ENCODE measurements at regions of chr1 and their contacts with region 1.

Region 1: GRCh38 chr1:37958690-37959089 is 11.8 kb upstream of the INPP5B start:
- DNase-seq: no peak
- ATAC-seq: no peak
- H3K4me3 ChIP-seq: no peak overlapping the region
- H3K27ac ChIP-seq: no peak overlapping the region
- H3K4me1 ChIP-seq: no peaks in the 10 kb centered on the region
- H3K27me3 ChIP-seq: no peaks in the 10 kb centered on the region
- CTCF ChIP-seq: no peak
- EP300 ChIP-seq: no peak
- POLR2A ChIP-seq: no peak
- RAD21 ChIP-seq: no peak

Region 2: GRCh38 chr1:37851782-37852210 is 106.9 kb before region 1 on chr1:
- CTCF ChIA-PET with region 1: no interaction called
- POLR2A ChIA-PET with region 1: no interaction called
- in situ Hi-C with region 1: no loop called
- intact Hi-C with region 1: no loop called
- DNase-seq: no peak
- ATAC-seq: peak; percentile 19; the same call in 2 of the 3 replicates
- H3K4me3 ChIP-seq: no peak overlapping the region
- H3K27ac ChIP-seq: no peak overlapping the region
- H3K4me1 ChIP-seq: peaks cover 6 to 20% of the 10 kb centered on the region in 2 experiments; a peak in 4 of 5 replicates
- H3K27me3 ChIP-seq: no peaks in the 10 kb centered on the region
- CTCF ChIP-seq: no peak
- EP300 ChIP-seq: no peak
- POLR2A ChIP-seq: no peak
- RAD21 ChIP-seq: no peak

Region 3: GRCh38 chr1:37947364-37947763 is 11.3 kb before region 1 on chr1:
- CTCF ChIA-PET with region 1: no interaction called
- POLR2A ChIA-PET with region 1: interaction called, 10 read pairs
- in situ Hi-C with region 1: no loop called
- intact Hi-C with region 1: no loop called
- DNase-seq: no peak
- ATAC-seq: no peak
- H3K4me3 ChIP-seq: no peak overlapping the region
- H3K27ac ChIP-seq: peak overlapping the region; percentile 89; the same call in 2 of the 3 replicates
- H3K4me1 ChIP-seq: peaks cover 15 to 29% of the 10 kb centered on the region in 2 experiments; a peak in 4 of 5 replicates
- H3K27me3 ChIP-seq: no peaks in the 10 kb centered on the region
- CTCF ChIP-seq: no peak
- EP300 ChIP-seq: no peak
- POLR2A ChIP-seq: no peak
- RAD21 ChIP-seq: no peak

Region 4: GRCh38 chr1:38088366-38088765 is 129.7 kb after region 1 on chr1:
- CTCF ChIA-PET with region 1: no interaction called
- POLR2A ChIA-PET with region 1: no interaction called
- in situ Hi-C with region 1: no loop called
- intact Hi-C with region 1: no loop called
- DNase-seq: peak in 1 of 4 experiments; percentile 40
- ATAC-seq: peak; percentile 88
- H3K4me3 ChIP-seq: no peak overlapping the region
- H3K27ac ChIP-seq: no peak overlapping the region
- H3K4me1 ChIP-seq: no peaks in the 10 kb centered on the region; a peak in 1 of 5 replicates
- H3K27me3 ChIP-seq: peaks cover 33 to 64% of the 10 kb centered on the region in 2 experiments; a peak in 4 of 5 replicates
- CTCF ChIP-seq: peak; percentile 15 to 38 (median 34); a peak in 4 of 6 replicates
- EP300 ChIP-seq: no peak
- POLR2A ChIP-seq: no peak
- RAD21 ChIP-seq: peak in 1 of 2 experiments; percentile 36; a peak in 2 of 4 replicates

Region 5: GRCh38 chr1:38152351-38153065 is 193.8 kb after region 1 on chr1:
- CTCF ChIA-PET with region 1: no interaction called
- POLR2A ChIA-PET with region 1: no interaction called
- in situ Hi-C with region 1: no loop called
- intact Hi-C with region 1: no loop called
- DNase-seq: peak in 1 of 4 experiments; percentile 12
- ATAC-seq: peak; percentile 66
- H3K4me3 ChIP-seq: no peak overlapping the region
- H3K27ac ChIP-seq: no peak overlapping the region
- H3K4me1 ChIP-seq: no peaks in the 10 kb centered on the region
- H3K27me3 ChIP-seq: no peaks in the 10 kb centered on the region; a peak in 1 of 5 replicates
- CTCF ChIP-seq: peak in 2 of 3 experiments; percentile 24 to 43; a peak in 3 of 6 replicates
- EP300 ChIP-seq: no peak
- POLR2A ChIP-seq: no peak
- RAD21 ChIP-seq: peak in 1 of 2 experiments; percentile 32; a peak in 1 of 4 replicates